Heart left ventricle (tissue), 16 donors: ENCODE measurements at regions of chr5 and their contacts with region 1.

Region 1: GRCh38 chr5:145917288-145917687 is 19.1 kb upstream of the SH3RF2 start:
- DNase-seq: no peak
- ATAC-seq: peak in 3 of 4 donors; percentile 61 to 85 (median 77)
- H3K4me3 ChIP-seq: no peak overlapping the region
- H3K27ac ChIP-seq: no peak overlapping the region
- H3K4me1 ChIP-seq: peaks cover 0 to 8% (median 3%) of the 10 kb centered on the region in 12 donors
- H3K27me3 ChIP-seq: no peaks in the 10 kb centered on the region
- CTCF ChIP-seq: no peak
- POLR2A ChIP-seq: no peak

Region 2: GRCh38 chr5:145847499-145848497 is 69.5 kb before region 1 on chr5:
- intact Hi-C with region 1: loop called in 1 of 10 experiments (anchors 10 kb)
- DNase-seq: no peak
- ATAC-seq: no peak
- H3K4me3 ChIP-seq: no peak overlapping the region
- H3K27ac ChIP-seq: no peak overlapping the region
- H3K4me1 ChIP-seq: no peaks in the 10 kb centered on the region
- H3K27me3 ChIP-seq: no peaks in the 10 kb centered on the region
- CTCF ChIP-seq: no peak
- POLR2A ChIP-seq: no peak

Region 3: GRCh38 chr5:145931718-145932117 is 14.4 kb after region 1 on chr5:
- intact Hi-C with region 1: no loop called
- DNase-seq: no peak
- ATAC-seq: no peak
- H3K4me3 ChIP-seq: no peak overlapping the region
- H3K27ac ChIP-seq: no peak overlapping the region
- H3K4me1 ChIP-seq: peaks cover 0 to 12% (median 2%) of the 10 kb centered on the region in 12 donors
- H3K27me3 ChIP-seq: peaks cover 0 to 11% (median 0%) of the 10 kb centered on the region in 9 donors
- CTCF ChIP-seq: no peak
- POLR2A ChIP-seq: no peak

Region 4: DNA sequence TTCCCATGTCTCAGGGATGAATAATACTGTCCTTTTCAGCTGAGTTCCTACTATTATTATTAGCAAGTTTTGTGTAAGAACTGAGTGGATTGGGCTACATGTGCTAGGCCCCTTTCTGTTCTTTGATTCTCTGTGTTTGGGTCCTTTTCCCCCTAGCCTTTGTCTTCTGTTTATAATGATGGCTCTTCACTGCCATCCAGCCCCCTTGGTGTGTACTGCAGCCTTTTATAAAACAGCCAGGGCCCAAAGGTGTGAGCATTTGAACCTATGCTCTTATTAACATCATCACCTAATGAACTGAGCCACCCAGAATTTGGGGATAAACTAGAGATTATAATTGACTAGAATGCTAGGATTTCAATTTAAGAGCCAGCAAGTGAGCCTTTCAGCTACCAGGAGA is 135.5 kb after region 1 on chr5:
- intact Hi-C with region 1: no loop called
- DNase-seq: no peak
- ATAC-seq: no peak
- H3K4me3 ChIP-seq: no peak overlapping the region
- H3K27ac ChIP-seq: no peak overlapping the region
- H3K4me1 ChIP-seq: peaks cover 0 to 5% (median 0%) of the 10 kb centered on the region in 12 donors
- H3K27me3 ChIP-seq: no peaks in the 10 kb centered on the region
- CTCF ChIP-seq: peak in 4 of 12 donors; percentile 23 to 26 (median 26)
- POLR2A ChIP-seq: no peak